ENCODE measurements at regions of chr15 and their contacts with region 1.

Region 1: DNA sequence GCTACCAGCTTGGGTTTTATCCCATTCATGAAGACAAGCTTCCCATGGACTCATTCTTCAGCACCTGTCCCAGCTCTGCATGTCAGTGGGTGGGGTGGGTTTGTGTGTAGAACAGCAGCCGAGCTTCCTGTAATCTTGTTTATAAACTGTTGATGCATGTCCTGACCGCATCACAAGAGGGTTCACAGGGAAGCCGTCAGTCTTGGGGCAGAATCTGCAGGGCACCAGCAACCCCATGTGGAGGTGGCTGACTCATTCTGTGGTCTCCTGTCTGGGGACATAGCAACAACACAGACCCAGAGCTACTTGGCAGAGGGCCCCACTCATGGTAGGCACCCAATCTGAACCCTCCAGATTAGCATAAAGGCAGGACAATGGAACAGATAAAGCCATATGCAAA is 35.6 kb downstream of the DAPK2 start:
- DNase-seq: peak; percentile 75
- CTCF ChIP-seq: peak; percentile 65

Region 2: DNA sequence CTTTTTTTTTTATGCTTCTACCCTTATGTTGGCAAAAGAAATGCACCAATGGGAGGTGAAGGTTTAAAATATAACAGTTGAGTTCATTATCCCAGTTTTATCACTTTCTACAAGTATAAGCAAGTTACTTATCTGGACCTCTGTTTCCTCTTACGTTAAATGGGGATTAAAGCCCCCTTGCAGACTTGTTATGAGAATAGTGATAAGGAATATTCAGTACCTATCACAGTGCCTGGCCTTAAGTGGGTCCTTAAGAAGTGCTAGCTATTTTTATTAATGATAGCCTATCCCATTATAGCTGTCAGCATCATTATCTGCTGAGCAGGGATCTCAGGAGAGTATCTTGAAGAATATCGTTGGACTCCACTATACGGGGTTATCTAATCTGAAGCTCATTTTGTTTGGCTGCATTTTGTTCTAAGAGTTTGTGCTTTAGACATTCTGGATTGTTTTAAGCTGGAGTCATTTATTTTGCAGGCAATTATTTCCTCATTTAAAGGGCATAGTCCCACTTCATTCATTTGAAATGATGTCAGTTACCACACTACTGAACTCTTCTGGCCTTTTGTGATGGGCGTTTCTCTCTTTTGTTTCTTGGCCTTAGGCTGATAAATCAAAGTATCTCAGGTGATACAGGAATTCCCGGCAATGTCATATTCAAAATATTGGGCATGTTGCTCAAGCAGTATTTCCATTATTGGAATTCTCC is 792.5 kb before region 1 on chr15:
- in situ Hi-C with region 1: no loop called
- DNase-seq: no peak
- CTCF ChIP-seq: no peak

Region 3: GRCh38 chr15:63915873-63916771 is 94.6 kb before region 1 on chr15:
- in situ Hi-C with region 1: loop called (anchors 25 kb)
- DNase-seq: no peak
- CTCF ChIP-seq: peak; percentile 23

Region 4: DNA sequence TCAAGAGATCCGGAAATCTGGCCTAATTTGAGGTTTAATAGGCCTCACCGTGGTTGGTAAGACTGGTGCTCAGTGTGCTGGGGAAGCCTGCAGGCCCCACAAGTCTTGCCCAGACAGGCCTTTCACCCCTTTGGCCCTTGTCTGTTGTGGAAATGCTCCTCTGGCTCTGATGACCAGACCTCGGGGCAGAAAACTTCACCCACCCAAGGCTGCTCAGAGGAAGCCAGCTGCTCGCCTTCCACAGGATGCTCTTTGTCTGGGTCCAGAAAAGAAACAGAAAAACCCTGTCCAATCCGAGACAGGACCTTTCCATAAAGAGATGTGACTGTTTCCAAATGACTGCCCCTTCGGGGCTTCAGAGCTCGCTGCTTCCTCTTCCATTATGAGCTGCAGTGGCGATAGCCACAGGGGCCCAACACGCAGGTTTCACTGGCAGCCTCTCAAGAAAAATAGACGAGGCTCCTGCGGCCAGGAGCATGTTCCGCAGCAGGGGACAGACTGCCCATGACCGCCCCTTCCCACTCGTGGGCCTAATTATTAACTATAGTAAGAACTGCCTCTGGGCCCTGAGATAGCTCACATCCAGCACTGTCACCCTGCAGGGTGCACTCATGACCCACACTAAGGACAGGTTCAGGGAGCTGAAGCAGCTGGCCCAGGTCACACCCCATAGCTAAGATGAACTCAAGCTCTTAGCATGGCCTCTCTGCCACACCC is 134.0 kb after region 1 on chr15:
- in situ Hi-C with region 1: no loop called
- DNase-seq: peak; percentile 81
- CTCF ChIP-seq: no peak

Measured in GM13977 (cell line).